ENCODE measurements at regions of chr20 and their contacts with region 1.

Region 1: DNA sequence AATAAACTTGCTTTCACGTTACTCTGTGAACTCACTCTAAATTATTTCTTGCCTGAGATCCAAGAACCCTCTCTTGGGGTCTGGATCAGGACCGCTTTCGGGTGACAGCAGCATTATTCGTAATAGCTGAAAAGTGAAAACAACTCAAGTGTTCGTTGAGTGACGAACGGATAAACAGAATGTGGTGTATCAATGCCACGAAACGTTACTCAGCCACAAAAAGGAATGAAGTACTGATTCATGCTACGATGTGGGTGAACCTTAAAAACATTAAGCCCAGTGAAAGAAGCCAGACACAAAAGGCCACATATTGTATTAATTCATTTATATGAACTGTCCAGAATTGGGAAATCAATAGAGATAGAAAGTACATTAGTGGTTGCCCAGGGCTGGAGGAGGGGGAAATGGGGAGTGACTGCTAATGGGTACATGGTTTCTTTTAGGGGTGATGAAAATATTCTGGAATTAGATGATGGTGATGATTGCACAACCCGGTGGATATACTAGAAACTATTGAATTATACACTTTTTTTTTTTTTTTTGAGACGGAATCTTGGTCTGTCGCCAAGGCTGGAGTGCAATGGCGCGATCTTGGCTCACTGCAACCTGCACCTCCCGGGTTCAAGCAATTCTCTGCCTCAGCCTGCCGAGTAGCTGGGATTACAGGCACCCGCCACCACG is 8.4 kb downstream of the PTGIS start:
- DNase-seq: no peak

Region 2: GRCh38 chr20:49594143-49594930 is 34.8 kb after region 1 on chr20:
- intact Hi-C with region 1: loop called in 1 of 2 experiments (anchors 5 kb)
- DNase-seq: peak; percentile 93